Natural killer cell (primary cell): ENCODE measurements at regions of chr22 and their contacts with region 1.

Region 1: DNA sequence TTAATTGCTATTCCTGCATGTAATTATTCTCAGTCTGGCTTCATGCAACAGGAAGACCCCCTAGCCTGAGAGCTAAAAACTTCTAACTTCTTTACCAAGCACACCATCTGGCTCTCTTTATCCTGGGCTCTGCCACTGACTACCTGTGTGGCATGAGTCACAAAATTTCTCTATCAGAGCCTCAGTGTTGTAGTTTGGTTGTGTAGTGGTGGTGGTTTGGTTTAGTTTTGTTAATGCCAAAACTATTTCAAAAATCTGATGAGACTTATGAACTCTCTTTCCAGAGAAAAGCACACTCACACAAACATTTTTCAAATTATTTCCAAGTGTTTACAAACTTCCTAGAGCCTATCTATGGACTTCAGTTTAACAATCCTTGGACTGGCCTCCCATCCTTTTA is 7.5 kb upstream of the IL17RA start:
- DNase-seq: no peak
- ATAC-seq: no peak
- H3K4me3 ChIP-seq: no peak overlapping the region
- H3K4me3 Mint-ChIP-seq: no peak overlapping the region
- H3K27ac ChIP-seq: no peak overlapping the region
- H3K27ac Mint-ChIP-seq: no peak overlapping the region
- H3K4me1 ChIP-seq: peaks cover 9% of the 10 kb centered on the region
- H3K4me1 Mint-ChIP-seq: no peaks in the 10 kb centered on the region
- H3K27me3 ChIP-seq: peaks cover 2% of the 10 kb centered on the region
- H3K27me3 Mint-ChIP-seq: peaks cover 0 to 26% of the 10 kb centered on the region in 2 donors
- CTCF ChIP-seq: no peak

Region 2: GRCh38 chr22:17106785-17107546 is 29.7 kb after region 1 on chr22:
- intact Hi-C with region 1: no loop called
- DNase-seq: peak in 1 of 2 donors; percentile 43
- ATAC-seq: peak in 2 of 3 donors; percentile 39 to 57
- H3K4me3 ChIP-seq: no peak overlapping the region
- H3K4me3 Mint-ChIP-seq: no peak overlapping the region
- H3K27ac ChIP-seq: no peak overlapping the region
- H3K27ac Mint-ChIP-seq: no peak overlapping the region
- H3K4me1 ChIP-seq: peaks cover 18% of the 10 kb centered on the region
- H3K4me1 Mint-ChIP-seq: peaks cover 0 to 23% of the 10 kb centered on the region in 2 donors
- H3K27me3 ChIP-seq: no peaks in the 10 kb centered on the region
- H3K27me3 Mint-ChIP-seq: no peaks in the 10 kb centered on the region
- CTCF ChIP-seq: no peak

Region 3: DNA sequence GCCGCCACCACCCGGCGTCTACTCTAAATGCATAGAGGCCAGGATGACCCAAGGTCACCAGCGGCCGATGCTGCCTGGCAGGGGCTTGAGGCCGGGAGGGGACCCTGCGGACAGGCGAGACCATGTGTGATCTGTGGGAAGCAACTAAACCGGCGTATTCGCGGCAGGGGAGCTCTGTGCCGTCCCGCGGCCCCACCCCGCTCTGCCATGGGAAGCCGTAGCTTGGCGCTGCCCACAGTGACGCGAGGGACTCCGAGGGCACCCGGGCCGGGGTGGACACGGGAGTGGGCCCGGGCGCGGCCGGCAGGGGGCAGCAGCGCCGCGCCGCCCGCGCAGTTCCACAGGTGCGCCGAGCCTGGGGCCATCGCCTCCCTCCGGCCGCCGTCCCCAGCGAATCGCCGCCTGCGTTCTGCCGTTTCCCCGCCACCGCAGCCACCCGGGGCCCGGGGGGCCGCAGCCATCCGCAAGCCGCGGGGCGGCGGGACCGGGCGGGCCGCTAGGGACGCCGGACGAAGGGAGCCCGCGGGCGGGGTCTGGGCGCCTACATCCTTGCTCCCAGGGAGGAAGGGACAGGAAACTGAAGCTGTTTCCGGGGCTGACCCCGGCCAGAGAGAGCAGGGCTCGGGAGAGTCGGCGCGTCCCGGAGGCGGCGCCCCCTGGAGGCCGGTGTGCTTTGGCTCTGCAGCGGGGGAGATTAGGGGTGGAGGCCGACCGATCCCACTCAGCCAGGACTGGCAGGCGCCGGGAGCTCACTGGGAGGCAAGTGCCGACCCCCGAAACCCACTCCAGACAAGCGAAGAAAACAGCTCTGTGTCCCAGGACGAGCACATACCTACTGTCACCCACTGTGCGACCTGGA is 94.3 kb after region 1 on chr22:
- intact Hi-C with region 1: loop called (anchors 2 kb)
- DNase-seq: peak; percentile 68 to 83
- ATAC-seq: peak; percentile 92 to 96 (median 92)
- H3K4me3 ChIP-seq: peak overlapping the region; percentile 49
- H3K4me3 Mint-ChIP-seq: peak overlapping the region; percentile 88
- H3K27ac ChIP-seq: peak overlapping the region; percentile 75
- H3K27ac Mint-ChIP-seq: peak overlapping the region; percentile 71 to 88
- H3K4me1 ChIP-seq: peaks cover 11% of the 10 kb centered on the region
- H3K4me1 Mint-ChIP-seq: peaks cover 5 to 6% of the 10 kb centered on the region in 2 donors
- H3K27me3 ChIP-seq: no peaks in the 10 kb centered on the region
- H3K27me3 Mint-ChIP-seq: peaks cover 0 to 5% of the 10 kb centered on the region in 2 donors
- CTCF ChIP-seq: peak; percentile 96

Region 4: GRCh38 chr22:17501679-17502285 is 424.5 kb after region 1 on chr22:
- intact Hi-C with region 1: loop called (anchors 1 kb)
- DNase-seq: peak in 1 of 2 donors; percentile 82
- ATAC-seq: peak; percentile 46 to 66 (median 48)
- H3K4me3 ChIP-seq: no peak overlapping the region
- H3K4me3 Mint-ChIP-seq: no peak overlapping the region
- H3K27ac ChIP-seq: no peak overlapping the region
- H3K27ac Mint-ChIP-seq: no peak overlapping the region
- H3K4me1 ChIP-seq: no peaks in the 10 kb centered on the region
- H3K4me1 Mint-ChIP-seq: no peaks in the 10 kb centered on the region
- H3K27me3 ChIP-seq: no peaks in the 10 kb centered on the region
- H3K27me3 Mint-ChIP-seq: peaks cover 0 to 3% of the 10 kb centered on the region in 2 donors
- CTCF ChIP-seq: peak; percentile 32